AG04449 (cell line): ENCODE measurements at regions of chr2 and their contacts with region 1.

Region 1: GRCh38 chr2:218691234-218691633 is 19.3 kb downstream of the STK36 start:
- DNase-seq: no peak
- H3K4me3 ChIP-seq: no peak overlapping the region
- CTCF ChIP-seq: no peak

Region 2: DNA sequence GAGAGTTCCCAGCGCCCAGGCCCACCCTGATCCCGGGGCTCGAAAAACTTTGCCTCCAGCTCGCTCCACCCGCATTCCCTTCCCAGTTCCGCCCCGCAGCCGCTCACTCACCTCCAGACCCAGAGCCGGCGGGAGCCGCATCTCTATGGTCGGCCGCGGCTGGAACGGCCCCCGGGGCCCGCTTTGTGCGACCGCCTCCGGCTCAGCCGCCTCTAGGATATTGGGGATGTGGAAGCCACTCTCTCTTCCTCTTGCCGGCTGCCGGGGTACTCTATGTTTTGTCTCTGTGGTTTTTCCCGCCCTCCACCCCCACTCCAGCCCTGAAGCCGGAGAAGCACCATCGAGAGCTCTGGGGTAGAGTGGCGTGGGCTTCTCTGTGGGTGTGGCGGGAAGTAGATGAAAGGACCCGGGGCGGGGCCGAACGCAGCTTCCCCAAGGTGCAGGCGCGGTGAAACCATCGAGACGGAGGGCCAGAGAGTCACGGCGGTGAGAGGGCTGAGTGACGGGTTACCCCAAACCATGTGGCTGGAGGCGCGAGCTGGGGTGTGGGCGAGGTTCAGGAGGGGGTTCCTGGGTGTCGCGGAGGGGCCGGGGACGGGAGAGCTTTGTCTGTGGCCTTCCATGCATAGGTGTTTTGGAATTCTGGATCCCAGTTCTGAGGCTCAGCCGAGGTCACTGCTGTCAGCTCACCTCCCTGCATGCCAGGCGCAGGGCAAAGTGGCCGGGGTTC is 31.8 kb before region 1 on chr2 and contains the starts of genes BCS1L and ZNF142:
- CTCF ChIA-PET with region 1: interaction called, 18 read pairs
- POLR2A ChIA-PET with region 1: interaction called, 3 read pairs
- DNase-seq: no peak
- H3K4me3 ChIP-seq: peak within 1 kb of the TSS; percentile 85
- CTCF ChIP-seq: no peak

Region 3: GRCh38 chr2:218671654-218672566 is 19.3 kb before region 1 on chr2 and contains the starts of genes RNF25 and STK36:
- CTCF ChIA-PET with region 1: interaction called, 105 read pairs
- POLR2A ChIA-PET with region 1: interaction called, 3 read pairs
- DNase-seq: no peak
- H3K4me3 ChIP-seq: peak within 1 kb of the TSS; percentile 88
- CTCF ChIP-seq: no peak

Region 4: GRCh38 chr2:218701806-218702205 is 10.6 kb after region 1 on chr2:
- CTCF ChIA-PET with region 1: interaction called, 37 read pairs
- POLR2A ChIA-PET with region 1: no interaction called
- DNase-seq: no peak
- H3K4me3 ChIP-seq: no peak overlapping the region
- CTCF ChIP-seq: no peak

Region 5: GRCh38 chr2:218959141-218959731 is 268.0 kb after region 1 on chr2 and contains the start of gene CDK5R2:
- CTCF ChIA-PET with region 1: no interaction called
- POLR2A ChIA-PET with region 1: no interaction called
- DNase-seq: no peak
- H3K4me3 ChIP-seq: peak within 1 kb of the TSS; percentile 44
- CTCF ChIP-seq: no peak